ENCODE measurements at regions of chr2 and their contacts with region 1.

Region 1: GRCh38 chr2:80499095-80499494 is 194.5 kb upstream of the LRRTM1 start:
- DNase-seq: peak; percentile 52 to 77 (median 72)
- H3K4me3 ChIP-seq: no peak overlapping the region
- H3K27ac ChIP-seq: no peak overlapping the region
- H3K4me1 ChIP-seq: no peaks in the 10 kb centered on the region
- H3K27me3 ChIP-seq: peaks cover 0 to 2% (median 0%) of the 10 kb centered on the region in 5 experiments

Region 2: DNA sequence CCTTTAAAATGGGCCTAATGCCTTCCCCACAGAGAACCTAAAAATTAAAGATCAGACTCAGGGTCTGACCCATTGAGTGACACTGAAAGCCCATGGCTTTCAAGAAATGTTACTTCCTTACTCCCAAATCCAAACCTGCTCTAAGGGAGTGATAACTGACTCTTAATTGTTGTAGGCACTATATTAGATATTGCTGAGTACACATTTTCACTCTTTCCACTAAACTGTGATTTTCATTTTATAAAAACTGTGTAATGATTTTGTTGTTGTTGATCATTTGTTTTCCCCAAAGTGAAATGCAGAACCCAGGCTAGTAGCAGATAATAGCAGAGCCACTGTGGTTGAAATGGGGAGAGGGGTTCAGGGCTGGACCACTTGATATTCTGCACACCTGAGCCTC is 281.6 kb before region 1 on chr2:
- CTCF ChIA-PET with region 1: no interaction called
- POLR2A ChIA-PET with region 1: no interaction called
- DNase-seq: no peak
- H3K4me3 ChIP-seq: no peak overlapping the region
- H3K27ac ChIP-seq: no peak overlapping the region
- H3K4me1 ChIP-seq: no peaks in the 10 kb centered on the region
- H3K27me3 ChIP-seq: no peaks in the 10 kb centered on the region

Region 3: DNA sequence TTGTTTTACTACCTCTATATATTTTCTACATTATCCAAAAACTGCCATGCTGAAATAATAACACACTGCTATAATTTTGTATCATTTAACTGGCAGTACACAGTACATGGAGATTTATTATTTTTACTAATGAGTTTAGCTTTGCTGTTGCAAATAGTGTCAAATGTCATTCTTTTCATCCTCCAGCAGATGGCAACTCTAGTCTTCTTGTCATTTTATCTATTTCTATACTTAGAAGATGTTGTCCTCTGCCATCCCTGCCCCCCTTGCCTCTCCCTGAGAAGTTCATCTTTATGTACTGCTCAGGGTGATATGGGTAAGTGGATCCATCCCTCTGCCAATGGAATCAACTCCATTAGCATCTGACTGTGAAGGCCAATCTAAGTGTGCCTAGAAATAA is 172.9 kb before region 1 on chr2:
- CTCF ChIA-PET with region 1: interaction called, 103 read pairs
- POLR2A ChIA-PET with region 1: no interaction called
- DNase-seq: peak in 2 of 3 donors; percentile 58 to 64
- H3K4me3 ChIP-seq: no peak overlapping the region
- H3K27ac ChIP-seq: no peak overlapping the region
- H3K4me1 ChIP-seq: peaks cover 0 to 19% (median 9%) of the 10 kb centered on the region in 4 experiments
- H3K27me3 ChIP-seq: peaks cover 6 to 48% (median 26%) of the 10 kb centered on the region in 5 experiments

Measured in common myeloid progenitor, CD34-positive (primary cell).